Naive thymus-derived CD4-positive, alpha-beta T cell (primary cell): ENCODE measurements at regions of chr3 and their contacts with region 1.

Region 1: GRCh38 chr3:156599089-156599874 is 44.4 kb upstream of the SSR3 start:
- DNase-seq: no peak
- ATAC-seq: no peak
- H3K4me3 ChIP-seq: no peak overlapping the region
- H3K4me3 Mint-ChIP-seq: no peak overlapping the region
- H3K27ac ChIP-seq: no peak overlapping the region
- H3K27ac Mint-ChIP-seq: no peak overlapping the region
- H3K4me1 ChIP-seq: peaks cover 0 to 5% of the 10 kb centered on the region in 2 donors
- H3K4me1 Mint-ChIP-seq: peaks cover 2 to 22% (median 9%) of the 10 kb centered on the region in 7 donors
- H3K27me3 ChIP-seq: peaks cover 0 to 3% of the 10 kb centered on the region in 2 donors
- H3K27me3 Mint-ChIP-seq: peaks cover 9 to 30% (median 13%) of the 10 kb centered on the region in 5 donors

Region 2: GRCh38 chr3:156522673-156523072 is 76.6 kb before region 1 on chr3:
- CTCF ChIA-PET with region 1: no interaction called
- POLR2A ChIA-PET with region 1: no interaction called
- intact Hi-C with region 1: no loop called
- DNase-seq: no peak
- ATAC-seq: peak; percentile 11
- H3K4me3 ChIP-seq: no peak overlapping the region
- H3K4me3 Mint-ChIP-seq: no peak overlapping the region
- H3K27ac ChIP-seq: no peak overlapping the region
- H3K27ac Mint-ChIP-seq: no peak overlapping the region
- H3K4me1 ChIP-seq: peaks cover 6 to 10% of the 10 kb centered on the region in 2 donors
- H3K4me1 Mint-ChIP-seq: peaks cover 6 to 33% (median 13%) of the 10 kb centered on the region in 7 donors
- H3K27me3 ChIP-seq: no peaks in the 10 kb centered on the region
- H3K27me3 Mint-ChIP-seq: peaks cover 13 to 67% (median 33%) of the 10 kb centered on the region in 5 donors

Region 3: DNA sequence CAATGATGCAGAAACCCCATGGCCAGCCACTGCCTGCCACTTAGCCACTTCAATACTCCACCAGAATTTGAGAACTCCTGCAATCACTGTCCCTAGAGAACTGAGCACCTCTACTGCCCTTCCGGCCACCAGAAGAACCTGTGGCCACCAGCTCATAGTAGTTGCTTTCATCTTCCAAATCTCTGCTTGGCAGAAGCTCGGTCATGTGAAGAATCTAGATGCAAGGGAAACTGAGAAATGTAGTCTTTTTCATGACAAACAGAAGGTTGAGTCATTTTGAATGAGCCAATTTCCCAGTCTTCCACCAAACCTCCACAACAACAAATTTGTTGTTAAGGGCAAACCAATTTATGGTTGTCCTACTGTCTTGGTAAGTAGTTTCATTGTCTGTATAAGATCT is 16.5 kb before region 1 on chr3:
- CTCF ChIA-PET with region 1: no interaction called
- POLR2A ChIA-PET with region 1: no interaction called
- intact Hi-C with region 1: no loop called
- DNase-seq: no peak
- ATAC-seq: no peak
- H3K4me3 ChIP-seq: no peak overlapping the region
- H3K4me3 Mint-ChIP-seq: no peak overlapping the region
- H3K27ac ChIP-seq: no peak overlapping the region
- H3K27ac Mint-ChIP-seq: no peak overlapping the region
- H3K4me1 ChIP-seq: no peaks in the 10 kb centered on the region
- H3K4me1 Mint-ChIP-seq: peaks cover 0 to 8% (median 3%) of the 10 kb centered on the region in 7 donors
- H3K27me3 ChIP-seq: no peaks in the 10 kb centered on the region
- H3K27me3 Mint-ChIP-seq: peaks cover 0 to 11% (median 5%) of the 10 kb centered on the region in 5 donors

Region 4: GRCh38 chr3:156611870-156612494 is 12.7 kb after region 1 on chr3:
- CTCF ChIA-PET with region 1: no interaction called
- POLR2A ChIA-PET with region 1: no interaction called
- intact Hi-C with region 1: loop called in 1 of 2 experiments (anchors 2 kb)
- DNase-seq: no peak
- ATAC-seq: no peak
- H3K4me3 ChIP-seq: no peak overlapping the region
- H3K4me3 Mint-ChIP-seq: no peak overlapping the region
- H3K27ac ChIP-seq: no peak overlapping the region
- H3K27ac Mint-ChIP-seq: no peak overlapping the region
- H3K4me1 ChIP-seq: no peaks in the 10 kb centered on the region
- H3K4me1 Mint-ChIP-seq: peaks cover 0 to 36% (median 0%) of the 10 kb centered on the region in 7 donors
- H3K27me3 ChIP-seq: no peaks in the 10 kb centered on the region
- H3K27me3 Mint-ChIP-seq: peaks cover 12 to 26% (median 15%) of the 10 kb centered on the region in 5 donors